PC-9 (cell line): ENCODE measurements at regions of chr6 and their contacts with region 1.

Region 1: DNA sequence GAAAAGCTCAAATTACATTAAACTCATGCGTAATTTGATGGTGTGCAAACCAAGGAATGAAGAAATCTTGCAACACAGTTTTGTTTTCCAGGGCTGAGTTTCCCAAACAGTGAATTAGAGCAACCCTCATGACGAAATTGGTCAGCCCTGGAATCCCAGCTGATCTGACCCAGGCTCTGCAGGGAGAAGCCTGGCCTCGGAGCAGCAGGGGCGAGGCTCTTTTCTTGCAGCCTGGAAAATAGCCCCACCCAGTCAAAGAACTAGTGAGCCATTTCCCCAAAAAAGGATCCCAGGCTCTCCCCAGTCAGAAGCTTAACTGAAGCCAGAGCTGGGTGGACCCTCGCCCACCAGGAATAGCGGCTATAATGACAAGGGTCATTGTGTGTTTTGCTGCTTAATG is 107.3 kb upstream of the SNX9 start:
- DNase-seq: peak; percentile 12 to 76
- H3K4me3 ChIP-seq: no peak overlapping the region
- H3K27ac ChIP-seq: peak overlapping the region; percentile 21; the same call in 1 of the 2 replicates
- H3K4me1 ChIP-seq: peaks cover 13% of the 10 kb centered on the region
- H3K27me3 ChIP-seq: no peaks in the 10 kb centered on the region
- CTCF ChIP-seq: no peak

Region 2: DNA sequence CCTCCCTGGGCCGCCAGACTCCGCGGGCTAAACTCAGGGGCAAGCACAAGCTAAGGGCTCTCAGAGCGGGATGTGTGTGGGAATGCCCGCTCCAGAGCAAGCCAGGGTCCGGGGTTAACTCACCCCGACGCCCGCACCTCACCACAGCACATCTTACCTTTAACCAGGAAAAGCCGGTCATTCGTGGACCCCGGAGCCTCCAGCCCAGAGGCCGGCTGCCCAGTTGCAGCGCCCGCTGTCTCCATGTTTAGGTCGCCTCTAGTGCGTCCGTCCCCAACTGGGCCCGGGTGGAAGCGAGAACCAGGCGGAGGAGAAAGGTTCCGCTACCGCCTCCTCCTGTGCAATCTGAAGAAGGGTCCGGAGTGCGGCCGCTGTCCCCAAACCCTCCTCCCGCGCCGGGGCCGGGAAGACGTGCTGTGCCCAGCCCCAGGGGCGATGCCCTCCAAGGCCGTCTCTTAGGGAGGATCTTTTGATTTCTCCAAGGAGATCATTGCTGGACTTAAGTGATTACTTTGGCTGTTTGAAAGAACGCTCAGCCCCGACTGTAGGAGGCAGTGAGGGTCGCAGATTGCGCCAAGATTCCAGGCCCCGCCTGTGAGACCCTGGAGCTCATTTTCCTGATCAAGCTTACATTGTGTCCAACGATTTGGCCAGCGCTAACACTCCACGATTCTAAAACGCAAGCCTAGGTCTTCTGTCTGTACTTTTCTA is 392.4 kb before region 1 on chr6 and contains the start of gene TMEM242:
- CTCF ChIA-PET with region 1: no interaction called
- POLR2A ChIA-PET with region 1: interaction called, 19 read pairs
- intact Hi-C with region 1: no loop called
- DNase-seq: peak; percentile 81 to 90
- H3K4me3 ChIP-seq: peak within 1 kb of the TSS; percentile 97
- H3K27ac ChIP-seq: peak within 1 kb of the TSS; percentile 64
- H3K4me1 ChIP-seq: peaks cover 23% of the 10 kb centered on the region
- H3K27me3 ChIP-seq: no peaks in the 10 kb centered on the region
- CTCF ChIP-seq: peak; percentile 51; the same call in 1 of the 2 replicates
- total RNA-seq, gene TMEM242: 8.1 and 8.7 TPM in 2 replicates